HepG2 (cell line): ENCODE measurements at regions of chr10 and their contacts with region 1.

Region 1: DNA sequence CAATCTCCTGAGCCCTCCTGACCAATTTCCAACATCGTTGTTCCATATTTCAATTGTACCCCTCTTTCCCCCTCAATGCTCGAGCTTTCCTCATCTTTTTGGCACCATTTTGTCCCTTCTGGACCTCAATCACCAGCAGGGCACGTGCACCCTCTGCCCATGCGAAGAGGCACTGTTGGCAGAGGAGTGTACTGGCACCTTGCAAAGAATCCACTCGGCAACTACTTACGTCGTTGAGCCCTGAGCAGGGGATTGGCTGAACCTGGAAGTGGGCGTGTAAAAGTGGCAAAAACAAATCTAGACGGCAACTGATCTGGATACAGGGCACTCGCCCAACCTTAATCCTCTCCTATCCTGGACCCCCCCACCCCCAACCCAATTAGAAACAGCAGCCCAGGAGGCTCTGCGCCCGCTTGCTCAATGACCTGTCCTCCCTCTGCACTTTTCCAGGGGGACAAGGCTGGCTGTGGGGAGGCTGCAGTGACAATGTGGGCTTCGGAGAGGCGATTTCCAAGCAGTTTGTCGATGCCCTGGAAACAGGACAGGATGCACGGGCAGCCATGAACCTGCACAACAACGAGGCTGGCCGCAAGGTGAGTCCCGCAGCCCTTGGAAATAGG is 18.8 kb downstream of the WNT8B start:
- DNase-seq: peak; percentile 81
- ATAC-seq: peak; percentile 95
- H3K4me3 ChIP-seq: peak overlapping the region; percentile 45 to 77 (median 58)
- H3K27ac ChIP-seq: no peak overlapping the region
- H3K4me1 ChIP-seq: peaks cover 10% of the 10 kb centered on the region; the same call in 1 of the 2 replicates
- H3K27me3 ChIP-seq: peaks cover 2 to 14% of the 10 kb centered on the region in 2 experiments; a peak in 3 of 5 replicates
- CTCF ChIP-seq: no peak
- EP300 ChIP-seq: no peak
- POLR2A ChIP-seq: no peak
- RAD21 ChIP-seq: no peak

Region 2: DNA sequence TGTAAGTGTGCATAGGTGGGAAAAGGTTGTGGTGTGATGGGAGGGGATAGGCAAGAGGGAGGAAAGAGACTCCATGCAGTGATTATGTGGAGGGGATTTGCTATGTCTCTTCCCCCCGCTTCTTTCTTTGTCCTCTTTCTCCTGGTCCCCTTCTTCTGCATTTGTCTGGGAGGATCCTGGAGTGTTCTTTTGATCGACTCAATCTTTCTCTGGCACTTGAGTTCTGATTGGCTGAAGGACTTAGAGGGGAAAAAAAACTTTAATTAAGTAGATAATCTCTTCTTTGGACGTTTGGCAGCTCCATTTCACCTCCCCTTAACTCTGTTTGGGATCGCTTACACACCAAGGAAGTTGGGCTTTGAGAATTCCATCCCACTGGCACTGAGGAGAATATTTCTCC is 18.9 kb before region 1 on chr10 and contains the start of gene WNT8B:
- CTCF ChIA-PET with region 1: no interaction called
- POLR2A ChIA-PET with region 1: no interaction called
- in situ Hi-C with region 1: no loop called
- intact Hi-C with region 1: no loop called
- DNase-seq: no peak
- ATAC-seq: no peak
- H3K4me3 ChIP-seq: no peak within 1 kb of the TSS
- H3K27ac ChIP-seq: no peak within 1 kb of the TSS
- H3K4me1 ChIP-seq: no peaks in the 10 kb centered on the region
- H3K27me3 ChIP-seq: peaks cover 0 to 15% of the 10 kb centered on the region in 2 experiments; a peak in 3 of 5 replicates
- CTCF ChIP-seq: no peak
- EP300 ChIP-seq: no peak
- POLR2A ChIP-seq: no peak
- RAD21 ChIP-seq: no peak
- total RNA-seq, gene WNT8B: 0.07 TPM in 1 of 2 replicates, not detected in the other

Region 3: DNA sequence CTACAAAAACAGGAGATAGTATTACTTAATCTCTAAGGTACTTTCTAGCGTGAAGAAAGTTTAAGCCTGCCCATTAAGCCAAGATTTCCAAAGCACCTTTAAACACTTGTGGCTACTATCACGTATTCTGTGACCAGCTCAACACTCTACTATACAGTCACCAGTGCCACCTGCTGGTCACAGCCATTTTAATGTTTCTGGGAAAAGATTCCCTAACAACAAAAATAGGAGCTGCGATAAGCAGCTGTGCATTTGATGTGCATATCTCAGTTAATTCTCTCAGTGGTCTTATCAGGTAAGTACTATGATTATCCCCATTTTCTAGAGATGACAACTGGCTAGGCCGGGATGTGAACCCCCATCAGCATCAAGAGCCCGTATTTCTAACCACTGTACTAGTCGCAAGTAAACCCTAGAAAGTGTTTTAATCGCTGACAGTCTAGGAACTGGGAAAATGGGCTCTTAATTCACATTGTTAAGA is 37.2 kb after region 1 on chr10:
- CTCF ChIA-PET with region 1: interaction called, 8 read pairs
- POLR2A ChIA-PET with region 1: interaction called, 5 read pairs
- in situ Hi-C with region 1: no loop called
- intact Hi-C with region 1: loop called (anchors 5 kb)
- DNase-seq: peak; percentile 65
- ATAC-seq: peak; percentile 76
- H3K4me3 ChIP-seq: peak overlapping the region; percentile 41 to 78 (median 60); a peak in 5 of 6 replicates
- H3K27ac ChIP-seq: no peak overlapping the region
- H3K4me1 ChIP-seq: peaks cover 14% of the 10 kb centered on the region
- H3K27me3 ChIP-seq: no peaks in the 10 kb centered on the region
- CTCF ChIP-seq: peak; percentile 77
- EP300 ChIP-seq: no peak
- POLR2A ChIP-seq: no peak
- RAD21 ChIP-seq: no peak